PC-3 (cell line): ENCODE measurements at regions of chr15 and their contacts with region 1.

Region 1: DNA sequence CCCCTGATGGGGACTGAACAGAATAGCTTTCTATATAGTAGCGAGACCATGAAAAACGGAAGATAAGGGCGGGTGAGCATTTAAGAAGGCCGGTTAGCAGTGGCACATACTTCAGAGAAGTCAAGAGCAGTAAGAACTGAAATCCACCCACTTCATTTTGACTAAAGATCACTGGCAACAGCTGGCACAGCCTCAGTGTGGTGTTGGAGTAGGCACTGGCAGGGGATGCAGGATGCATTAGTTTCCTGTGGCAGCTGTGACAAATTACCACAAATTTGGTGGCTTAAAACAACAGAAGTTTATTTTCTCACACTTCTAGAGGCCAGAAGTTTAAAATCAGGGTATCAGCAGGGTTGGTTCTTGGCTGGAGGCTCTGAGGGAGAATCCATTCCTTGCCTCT is 176.5 kb downstream of the ADAMTSL3 start:
- DNase-seq: no peak
- ATAC-seq: no peak
- H3K4me3 ChIP-seq: no peak overlapping the region
- H3K27ac ChIP-seq: no peak overlapping the region
- H3K4me1 ChIP-seq: peaks cover 2% of the 10 kb centered on the region; the same call in 1 of the 2 replicates
- H3K27me3 ChIP-seq: no peaks in the 10 kb centered on the region
- CTCF ChIP-seq: no peak

Region 2: DNA sequence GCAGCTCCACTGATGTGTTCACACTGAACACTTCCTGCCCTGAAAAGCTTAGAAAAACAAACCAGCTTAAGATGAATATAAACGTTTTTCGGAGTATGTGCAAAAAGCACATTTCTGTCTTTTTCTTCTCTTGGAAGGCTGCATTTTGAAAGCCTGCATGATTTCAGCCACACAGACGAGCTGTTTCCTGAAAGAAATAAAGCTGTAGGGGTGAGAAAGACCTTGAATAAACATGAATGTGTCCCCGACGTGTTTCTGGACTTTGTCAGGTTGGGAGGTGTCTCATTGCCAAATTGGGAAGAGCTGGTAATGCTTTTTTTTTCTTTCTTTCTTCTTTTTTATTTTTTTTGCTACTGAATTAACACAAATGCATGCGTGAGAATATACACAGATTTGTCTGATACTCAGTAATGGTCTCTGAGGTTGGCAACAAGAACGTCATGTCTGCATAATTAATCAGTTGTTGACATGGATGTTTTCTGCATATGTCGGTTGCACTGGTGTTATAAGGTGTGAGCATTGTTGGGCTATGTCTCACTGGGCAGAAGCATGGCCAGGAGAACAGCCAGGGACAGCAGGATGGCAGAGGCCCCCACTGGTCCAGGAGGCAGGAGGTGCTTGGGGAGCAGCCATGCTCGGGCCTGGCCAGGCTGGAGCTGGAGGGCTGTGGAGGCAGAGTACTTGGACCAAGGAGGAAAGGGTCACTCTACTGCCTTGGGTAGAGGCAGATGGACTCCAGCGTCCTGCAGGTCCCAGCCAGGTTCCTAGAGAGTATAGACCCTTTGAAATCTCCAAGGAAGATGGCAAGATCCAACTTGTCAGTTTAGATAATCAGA is 137.4 kb before region 1 on chr15:
- CTCF ChIA-PET with region 1: interaction called, 10 read pairs
- POLR2A ChIA-PET with region 1: no interaction called
- intact Hi-C with region 1: no loop called
- DNase-seq: no peak
- ATAC-seq: no peak
- H3K4me3 ChIP-seq: no peak overlapping the region
- H3K27ac ChIP-seq: peak overlapping the region; percentile 83
- H3K4me1 ChIP-seq: peaks cover 48% of the 10 kb centered on the region
- H3K27me3 ChIP-seq: no peaks in the 10 kb centered on the region
- CTCF ChIP-seq: no peak

Region 3: DNA sequence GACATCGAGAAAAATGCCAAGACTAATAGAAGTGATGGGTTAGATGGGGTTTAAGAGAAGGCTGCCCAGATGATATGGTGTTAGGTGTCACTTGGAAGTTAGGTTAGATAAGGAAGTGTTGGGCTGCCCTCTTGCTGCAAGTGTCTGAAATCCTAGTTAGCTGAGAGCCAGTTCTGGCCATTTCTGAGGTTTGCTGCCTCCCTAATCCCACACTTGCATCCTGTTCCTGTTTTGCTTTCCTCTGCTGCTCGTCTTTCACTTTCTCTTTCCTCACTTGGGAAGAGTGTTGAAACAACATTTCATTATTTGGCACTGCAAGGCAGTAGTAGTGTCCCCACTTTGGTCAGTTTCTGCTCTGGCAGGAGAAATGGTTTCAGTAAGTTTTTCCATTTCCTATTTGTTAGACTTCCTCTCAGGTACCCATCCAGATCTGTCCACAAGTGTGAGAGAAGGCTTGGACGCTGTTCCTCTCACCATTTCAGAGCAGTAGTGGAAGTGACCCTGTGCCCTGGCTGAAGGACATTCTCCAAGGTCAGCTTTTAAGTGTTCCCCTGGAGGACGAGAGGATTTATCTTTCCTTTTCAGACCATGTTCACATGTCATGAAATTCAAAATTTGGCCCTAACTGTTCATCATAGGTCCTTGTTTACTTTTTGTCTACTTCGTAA is 83.2 kb before region 1 on chr15:
- CTCF ChIA-PET with region 1: no interaction called
- POLR2A ChIA-PET with region 1: no interaction called
- intact Hi-C with region 1: no loop called
- DNase-seq: peak; percentile 59
- ATAC-seq: peak; percentile 74
- H3K4me3 ChIP-seq: peak overlapping the region; percentile 39; the same call in 1 of the 2 replicates
- H3K27ac ChIP-seq: peak overlapping the region; percentile 98
- H3K4me1 ChIP-seq: peaks cover 21% of the 10 kb centered on the region
- H3K27me3 ChIP-seq: no peaks in the 10 kb centered on the region
- CTCF ChIP-seq: peak; percentile 62

Region 4: DNA sequence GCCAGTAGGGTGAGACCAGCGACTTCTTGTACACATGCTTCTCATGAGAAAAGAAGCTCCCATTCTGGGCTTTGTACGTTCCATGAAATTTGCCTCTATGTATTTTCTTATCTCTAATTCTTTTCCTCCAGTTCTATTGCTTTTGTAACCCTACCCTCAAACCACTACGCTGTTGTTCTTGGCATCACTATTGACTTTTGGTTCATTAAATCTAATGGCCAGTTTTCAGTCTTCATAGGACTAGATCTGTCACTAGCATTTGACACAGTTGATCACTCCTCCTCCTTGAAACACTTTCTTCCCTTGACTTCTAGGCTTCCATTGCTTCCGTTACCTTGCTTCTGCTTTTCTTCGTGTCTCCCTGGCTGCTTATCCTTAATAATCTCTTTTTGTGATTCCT is 283.5 kb after region 1 on chr15:
- CTCF ChIA-PET with region 1: no interaction called
- POLR2A ChIA-PET with region 1: no interaction called
- intact Hi-C with region 1: no loop called
- DNase-seq: no peak
- ATAC-seq: no peak
- H3K4me3 ChIP-seq: no peak overlapping the region
- H3K27ac ChIP-seq: no peak overlapping the region
- H3K4me1 ChIP-seq: peaks cover 5% of the 10 kb centered on the region; the same call in 1 of the 2 replicates
- H3K27me3 ChIP-seq: no peaks in the 10 kb centered on the region
- CTCF ChIP-seq: no peak